Calu3 (cell line): ENCODE measurements at regions of chr6 and their contacts with region 1.

Region 1: DNA sequence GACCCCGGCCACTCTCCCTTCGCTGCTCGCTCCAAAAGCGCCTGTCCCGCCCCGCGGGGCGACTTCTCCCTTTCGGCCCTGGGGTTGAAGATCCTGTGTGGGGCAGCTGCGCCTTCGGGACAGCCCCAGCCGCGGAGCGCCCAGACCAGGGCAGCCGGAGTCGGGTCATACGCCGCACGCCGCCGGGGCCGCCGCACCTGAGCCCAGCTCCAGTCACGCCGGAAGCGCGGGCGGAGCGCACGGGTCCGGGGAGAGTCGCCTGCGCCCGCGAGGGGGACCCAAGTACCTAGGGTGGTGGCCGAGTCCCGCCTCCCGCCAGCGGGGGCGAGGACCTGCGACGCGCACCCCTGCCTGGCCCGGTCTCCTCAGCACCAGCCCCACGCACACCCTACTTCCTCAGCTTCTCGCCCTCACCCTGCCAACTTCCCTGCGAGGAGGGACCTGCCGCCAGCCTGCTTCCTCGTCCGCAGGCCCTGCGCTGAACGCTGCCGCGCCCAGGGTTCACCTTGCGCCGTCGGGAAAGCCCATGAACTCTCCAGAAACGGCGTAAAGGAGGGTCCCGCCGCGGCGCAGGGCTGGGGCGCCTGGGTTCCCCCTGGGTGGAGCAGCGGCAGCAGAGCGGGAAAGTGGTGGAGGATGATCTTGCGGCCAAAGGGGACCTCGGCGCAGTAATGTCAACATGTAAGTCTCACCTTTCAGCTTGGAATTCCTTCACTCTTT is at the start of gene ADGRG6:
- DNase-seq: peak; percentile 77
- H3K4me3 Mint-ChIP-seq: peak within 1 kb of the TSS; percentile 94
- H3K27ac Mint-ChIP-seq: peak within 1 kb of the TSS; percentile 94
- H3K4me1 Mint-ChIP-seq: peaks cover 26% of the 10 kb centered on the region
- H3K27me3 Mint-ChIP-seq: no peaks in the 10 kb centered on the region
- CTCF ChIP-seq: no peak
- total RNA-seq, gene ADGRG6: 84.6 and 109 TPM in 2 replicates

Region 2: DNA sequence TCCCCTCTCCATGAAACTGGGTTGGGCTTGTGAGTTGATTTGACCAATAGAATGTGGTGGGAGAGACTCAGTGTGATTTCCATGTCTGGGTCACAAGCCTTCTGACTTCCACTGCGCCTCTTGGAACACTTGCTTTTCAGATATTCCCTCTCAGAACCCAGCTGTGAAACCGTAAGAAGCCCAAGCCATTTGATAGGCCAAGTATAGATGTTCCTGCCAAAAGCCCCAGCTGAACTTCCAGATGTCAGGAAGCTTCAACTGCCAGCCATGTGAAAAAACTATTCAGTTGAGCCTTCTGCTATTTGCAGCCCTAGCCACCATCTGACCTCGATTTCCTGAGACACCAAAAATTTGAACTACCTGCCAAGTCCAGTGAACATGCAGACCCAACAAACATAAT is 556.8 kb before region 1 on chr6:
- CTCF ChIA-PET with region 1: no interaction called
- intact Hi-C with region 1: no loop called
- DNase-seq: no peak
- H3K4me3 Mint-ChIP-seq: no peak overlapping the region
- H3K27ac Mint-ChIP-seq: no peak overlapping the region
- H3K4me1 Mint-ChIP-seq: no peaks in the 10 kb centered on the region
- H3K27me3 Mint-ChIP-seq: no peaks in the 10 kb centered on the region
- CTCF ChIP-seq: no peak

Region 3: GRCh38 chr6:142146828-142147662 is 154.8 kb before region 1 on chr6 and contains the starts of genes NMBR and VTA1:
- CTCF ChIA-PET with region 1: no interaction called
- intact Hi-C with region 1: loop called (anchors 5 kb)
- DNase-seq: peak; percentile 90
- H3K4me3 Mint-ChIP-seq: peak within 1 kb of the TSS; percentile 92
- H3K27ac Mint-ChIP-seq: peak within 1 kb of the TSS; percentile 96
- H3K4me1 Mint-ChIP-seq: peaks cover 19% of the 10 kb centered on the region
- H3K27me3 Mint-ChIP-seq: no peaks in the 10 kb centered on the region
- CTCF ChIP-seq: peak; percentile 62
- total RNA-seq, gene NMBR: not detected in 2 replicates
- total RNA-seq, gene VTA1: 32.4 and 35.5 TPM in 2 replicates

Region 4: GRCh38 chr6:142233945-142234682 is 67.7 kb before region 1 on chr6:
- CTCF ChIA-PET with region 1: interaction called, 8 read pairs
- intact Hi-C with region 1: loop called (anchors 2 kb)
- DNase-seq: no peak
- H3K4me3 Mint-ChIP-seq: no peak overlapping the region
- H3K27ac Mint-ChIP-seq: no peak overlapping the region
- H3K4me1 Mint-ChIP-seq: no peaks in the 10 kb centered on the region
- H3K27me3 Mint-ChIP-seq: no peaks in the 10 kb centered on the region
- CTCF ChIP-seq: no peak

Region 5: GRCh38 chr6:142275251-142276006 is 26.4 kb before region 1 on chr6:
- CTCF ChIA-PET with region 1: interaction called, 4 read pairs
- intact Hi-C with region 1: loop called (anchors 2 kb)
- DNase-seq: peak; percentile 50
- H3K4me3 Mint-ChIP-seq: peak overlapping the region; percentile 58
- H3K27ac Mint-ChIP-seq: peak overlapping the region; percentile 84
- H3K4me1 Mint-ChIP-seq: peaks cover 45% of the 10 kb centered on the region
- H3K27me3 Mint-ChIP-seq: no peaks in the 10 kb centered on the region
- CTCF ChIP-seq: no peak

Region 6: GRCh38 chr6:142374965-142375733 is 73.3 kb after region 1 on chr6:
- CTCF ChIA-PET with region 1: interaction called, 3 read pairs
- intact Hi-C with region 1: loop called (anchors 2 kb)
- DNase-seq: peak; percentile 24
- H3K4me3 Mint-ChIP-seq: no peak overlapping the region
- H3K27ac Mint-ChIP-seq: peak overlapping the region; percentile 79
- H3K4me1 Mint-ChIP-seq: peaks cover 57% of the 10 kb centered on the region
- H3K27me3 Mint-ChIP-seq: no peaks in the 10 kb centered on the region
- CTCF ChIP-seq: no peak